ENCODE measurements at regions of chr17 and their contacts with region 1.

Region 1: GRCh38 chr17:39069114-39069756 is 82.2 kb downstream of the PLXDC1 start:
- DNase-seq: no peak
- H3K4me3 ChIP-seq: no peak overlapping the region
- H3K27ac ChIP-seq: no peak overlapping the region
- H3K4me1 ChIP-seq: no peaks in the 10 kb centered on the region
- H3K27me3 ChIP-seq: no peaks in the 10 kb centered on the region
- CTCF ChIP-seq: peak; percentile 48 to 53 (median 48)
- EP300 ChIP-seq: no peak
- POLR2A ChIP-seq: no peak

Region 2: GRCh38 chr17:39016193-39017153 is 52.8 kb before region 1 on chr17:
- intact Hi-C with region 1: loop called in 1 of 4 experiments (anchors 2 kb)
- DNase-seq: no peak
- H3K4me3 ChIP-seq: no peak overlapping the region
- H3K27ac ChIP-seq: no peak overlapping the region
- H3K4me1 ChIP-seq: peaks cover 4% of the 10 kb centered on the region
- H3K27me3 ChIP-seq: no peaks in the 10 kb centered on the region
- CTCF ChIP-seq: no peak
- EP300 ChIP-seq: no peak
- POLR2A ChIP-seq: no peak

Region 3: GRCh38 chr17:39224778-39225307 is 155.6 kb after region 1 on chr17:
- intact Hi-C with region 1: no loop called
- DNase-seq: no peak
- H3K4me3 ChIP-seq: peak overlapping the region; percentile 42
- H3K27ac ChIP-seq: no peak overlapping the region
- H3K4me1 ChIP-seq: peaks cover 2% of the 10 kb centered on the region
- H3K27me3 ChIP-seq: no peaks in the 10 kb centered on the region
- CTCF ChIP-seq: no peak
- EP300 ChIP-seq: no peak
- POLR2A ChIP-seq: no peak